Activated CD4-positive, alpha-beta memory T cell treated with anti-CD3 and anti-CD28 coated beads for 36 hours (primary cell): ENCODE measurements at regions of chr20 and their contacts with region 1.

Region 1: GRCh38 chr20:58888521-58889333 is 36.2 kb downstream of the GNAS start:
- DNase-seq: peak; percentile 88
- H3K4me3 Mint-ChIP-seq: peak overlapping the region; percentile 80
- H3K27ac Mint-ChIP-seq: peak overlapping the region; percentile 58
- H3K4me1 Mint-ChIP-seq: peaks cover 27% of the 10 kb centered on the region
- H3K27me3 Mint-ChIP-seq: no peaks in the 10 kb centered on the region

Region 2: DNA sequence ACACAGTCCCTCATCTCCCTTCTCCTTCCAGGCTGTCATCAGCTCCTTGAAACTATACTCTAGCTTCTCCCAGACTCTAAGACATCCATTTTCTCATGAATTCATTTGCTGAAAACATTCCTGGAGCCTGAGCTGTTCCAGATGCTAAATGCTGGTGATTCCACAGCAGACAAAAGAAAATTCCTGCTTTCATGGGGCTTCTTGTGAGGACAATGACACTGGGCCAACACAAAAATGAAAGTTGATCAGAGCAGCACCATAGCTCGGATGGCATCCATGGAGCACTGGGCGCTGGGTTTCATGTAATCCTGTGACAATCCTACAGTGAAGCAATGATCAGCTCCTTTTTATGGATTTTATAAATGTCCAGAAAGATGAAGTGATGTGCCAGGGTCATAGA is 285.0 kb before region 1 on chr20:
- CTCF ChIA-PET with region 1: no interaction called
- POLR2A ChIA-PET with region 1: no interaction called
- intact Hi-C with region 1: no loop called
- DNase-seq: no peak
- H3K4me3 Mint-ChIP-seq: no peak overlapping the region
- H3K27ac Mint-ChIP-seq: no peak overlapping the region
- H3K4me1 Mint-ChIP-seq: no peaks in the 10 kb centered on the region
- H3K27me3 Mint-ChIP-seq: no peaks in the 10 kb centered on the region

Region 3: DNA sequence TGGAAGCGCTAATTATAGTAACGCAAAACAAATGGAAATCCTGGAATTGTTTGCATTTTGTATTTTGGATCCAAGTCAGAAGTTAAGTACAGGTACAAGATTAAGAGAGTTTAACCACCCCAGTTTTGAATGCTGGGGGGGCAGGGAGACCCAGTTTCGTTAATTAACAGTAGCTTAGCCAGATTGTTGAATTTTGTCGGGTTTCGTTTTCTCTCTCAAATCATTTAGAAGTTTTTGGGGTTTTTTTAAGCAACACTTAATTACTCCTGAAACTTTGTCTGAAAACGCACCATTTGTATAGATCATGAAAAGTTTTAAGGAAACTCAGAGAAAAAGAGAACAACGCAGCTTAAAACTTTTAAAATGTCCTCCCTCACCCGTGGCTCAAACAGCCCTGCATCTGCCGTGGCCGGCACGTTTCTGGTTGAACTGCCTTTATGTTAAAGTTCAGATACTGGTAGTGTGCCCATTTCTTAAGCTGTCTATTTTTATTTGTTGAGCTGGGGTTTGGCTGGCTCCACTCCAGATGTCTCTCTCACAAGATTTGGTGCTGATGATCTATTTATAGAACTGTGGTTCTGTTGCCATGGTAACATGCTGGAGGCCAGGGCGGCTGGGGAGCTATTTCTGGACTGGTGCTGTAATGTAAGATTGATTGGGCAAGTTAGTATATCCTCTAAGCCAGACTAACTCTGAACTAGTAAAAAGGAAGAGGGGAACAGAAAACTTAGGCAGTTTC is 18.8 kb after region 1 on chr20:
- CTCF ChIA-PET with region 1: interaction called, 3 read pairs
- POLR2A ChIA-PET with region 1: interaction called, 3 read pairs
- intact Hi-C with region 1: loop called (anchors 1 kb)
- DNase-seq: peak; percentile 72
- H3K4me3 Mint-ChIP-seq: peak overlapping the region; percentile 55
- H3K27ac Mint-ChIP-seq: peak overlapping the region; percentile 81
- H3K4me1 Mint-ChIP-seq: peaks cover 52% of the 10 kb centered on the region
- H3K27me3 Mint-ChIP-seq: no peaks in the 10 kb centered on the region

Region 4: DNA sequence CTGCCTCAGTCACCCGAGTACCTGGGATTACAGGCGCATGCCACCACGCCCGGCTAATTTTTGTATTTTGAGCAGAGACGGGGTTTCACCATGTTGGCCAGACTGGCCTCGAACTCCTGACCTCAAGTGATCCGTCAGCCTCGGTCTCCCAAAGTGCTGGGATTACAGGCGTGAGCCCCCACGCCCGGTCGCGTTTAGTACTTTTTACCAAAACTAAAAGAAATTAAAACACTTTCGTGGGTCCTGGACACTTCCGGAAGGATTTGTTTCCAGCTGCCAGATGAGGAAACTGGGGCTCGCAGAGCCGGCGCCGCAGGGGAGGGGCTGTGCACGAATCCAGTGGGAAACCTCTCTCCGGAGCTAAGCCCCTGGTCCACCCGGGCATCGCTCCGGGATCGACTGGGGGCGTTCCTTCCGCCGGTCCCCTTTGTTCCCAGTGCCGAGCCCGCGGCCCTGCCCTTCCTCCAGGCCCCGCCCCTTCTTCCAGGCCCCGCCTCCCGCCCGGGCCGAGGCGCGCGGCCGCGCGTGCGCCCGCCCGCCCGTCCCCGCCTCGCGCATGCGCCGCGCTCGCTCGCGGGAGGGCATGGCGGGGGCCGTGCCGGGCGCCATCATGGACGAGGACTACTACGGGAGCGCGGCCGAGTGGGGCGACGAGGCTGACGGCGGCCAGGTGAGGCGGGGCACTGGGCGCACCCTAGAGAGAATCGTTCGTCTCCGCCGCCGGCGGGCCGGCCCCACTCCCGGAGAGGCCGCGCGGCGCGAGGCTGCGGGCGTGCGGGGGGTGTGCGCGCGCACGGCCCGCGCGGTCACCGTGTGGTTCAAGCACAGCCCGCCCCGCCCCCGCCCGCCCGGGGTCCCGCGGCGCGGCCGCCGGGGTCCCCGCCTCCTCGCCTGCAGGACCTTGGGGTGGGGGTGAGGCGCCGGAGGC is 92.2 kb after region 1 on chr20 and contains the start of gene NELFCD:
- CTCF ChIA-PET with region 1: no interaction called
- POLR2A ChIA-PET with region 1: interaction called, 4 read pairs
- intact Hi-C with region 1: loop called (anchors 2 kb)
- DNase-seq: peak; percentile 92
- H3K4me3 Mint-ChIP-seq: peak within 1 kb of the TSS; percentile 91
- H3K27ac Mint-ChIP-seq: peak within 1 kb of the TSS; percentile 88
- H3K4me1 Mint-ChIP-seq: peaks cover 34% of the 10 kb centered on the region
- H3K27me3 Mint-ChIP-seq: no peaks in the 10 kb centered on the region
- total RNA-seq, gene NELFCD: 80.5 to 92.3 TPM

Region 5: DNA sequence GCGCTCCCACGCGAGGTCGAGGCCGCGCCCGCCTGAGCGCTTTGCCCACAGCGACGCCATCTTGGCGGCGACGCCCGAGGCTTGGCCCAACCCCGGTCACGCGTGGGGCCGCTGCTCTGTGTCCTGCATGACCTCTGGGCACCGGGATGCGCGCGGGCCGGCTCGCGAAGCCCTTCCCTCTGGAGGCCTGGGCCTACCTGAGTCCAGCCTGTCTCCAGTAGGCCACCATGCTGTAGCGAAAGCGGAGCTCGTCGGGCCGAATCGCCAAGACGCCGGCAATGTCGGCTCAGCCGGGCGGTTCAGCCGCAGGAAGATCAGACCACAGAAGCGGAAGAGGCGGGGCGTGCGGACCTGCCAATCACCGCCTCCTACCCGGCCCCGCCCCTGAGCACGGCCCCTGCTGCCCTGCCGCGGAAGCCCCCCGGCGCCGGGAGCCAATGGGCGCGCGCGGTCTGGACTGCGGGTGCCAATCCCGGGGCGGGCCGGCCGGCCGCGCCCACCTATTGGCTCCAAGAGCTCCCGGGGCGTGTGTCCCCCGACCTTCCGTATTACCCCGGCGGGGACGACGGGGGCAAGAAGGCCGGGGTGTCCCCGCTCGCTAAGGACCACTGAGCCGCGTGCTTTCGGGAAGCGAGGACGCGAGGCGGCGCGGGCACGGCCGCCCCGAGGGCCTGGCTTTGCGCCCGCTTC is 143.4 kb after region 1 on chr20 and contains the start of gene ATP5F1E:
- CTCF ChIA-PET with region 1: no interaction called
- POLR2A ChIA-PET with region 1: interaction called, 12 read pairs
- intact Hi-C with region 1: loop called (anchors 2 kb)
- DNase-seq: peak; percentile 97
- H3K4me3 Mint-ChIP-seq: peak within 1 kb of the TSS; percentile 94
- H3K27ac Mint-ChIP-seq: peak within 1 kb of the TSS; percentile 94
- H3K4me1 Mint-ChIP-seq: peaks cover 73% of the 10 kb centered on the region
- H3K27me3 Mint-ChIP-seq: no peaks in the 10 kb centered on the region
- total RNA-seq, gene ATP5F1E: 82.2 to 90.4 TPM

Region 6: GRCh38 chr20:59120491-59120890 is 231.8 kb after region 1 on chr20:
- CTCF ChIA-PET with region 1: no interaction called
- POLR2A ChIA-PET with region 1: no interaction called
- intact Hi-C with region 1: loop called (anchors 1 kb)
- DNase-seq: peak; percentile 65
- H3K4me3 Mint-ChIP-seq: no peak overlapping the region
- H3K27ac Mint-ChIP-seq: peak overlapping the region; percentile 94
- H3K4me1 Mint-ChIP-seq: peaks cover 71% of the 10 kb centered on the region
- H3K27me3 Mint-ChIP-seq: no peaks in the 10 kb centered on the region

Region 7: DNA sequence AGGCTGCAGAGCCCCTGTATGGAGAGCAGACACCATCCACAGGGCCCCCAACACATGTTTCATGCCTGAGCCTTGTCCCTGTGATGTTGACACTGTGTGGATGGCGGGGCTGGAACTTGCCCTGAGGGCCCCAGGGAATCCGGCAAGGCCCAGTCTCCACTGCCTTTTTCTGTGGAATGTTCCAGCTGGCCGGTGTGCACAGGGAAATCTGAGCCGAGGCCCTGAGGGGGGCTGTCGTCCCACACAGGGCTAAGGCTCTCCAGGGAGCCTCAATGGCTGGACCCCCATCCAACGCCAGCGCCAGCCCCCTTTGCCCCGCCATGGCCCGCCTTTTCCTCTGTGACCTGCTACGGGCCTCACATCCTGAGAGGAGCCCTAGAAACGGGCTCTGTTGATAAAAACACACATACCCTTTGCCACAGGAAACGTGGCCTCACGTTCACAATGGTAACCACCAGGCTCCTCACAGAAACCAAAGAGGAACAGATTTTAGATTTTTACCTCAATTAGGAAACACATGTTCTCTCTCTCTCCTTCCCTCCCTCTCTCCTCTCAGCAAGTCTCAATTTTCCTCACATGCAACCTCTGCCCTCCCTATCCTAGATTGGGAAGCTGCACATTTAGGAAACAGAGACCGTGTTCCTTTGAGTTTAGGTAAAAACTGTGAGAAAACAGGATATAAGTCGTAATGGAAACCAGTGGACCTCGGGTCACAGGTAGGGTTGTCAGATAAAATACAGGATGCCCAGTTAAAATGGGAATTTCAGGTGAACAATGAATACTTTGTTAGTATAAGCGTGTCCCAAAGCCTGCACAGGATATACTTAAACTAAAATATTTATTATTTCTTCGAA is 261.2 kb after region 1 on chr20:
- CTCF ChIA-PET with region 1: no interaction called
- POLR2A ChIA-PET with region 1: no interaction called
- intact Hi-C with region 1: loop called (anchors 1 kb)
- DNase-seq: peak; percentile 85
- H3K4me3 Mint-ChIP-seq: peak overlapping the region; percentile 62
- H3K27ac Mint-ChIP-seq: peak overlapping the region; percentile 92
- H3K4me1 Mint-ChIP-seq: peaks cover 88% of the 10 kb centered on the region
- H3K27me3 Mint-ChIP-seq: no peaks in the 10 kb centered on the region

Region 8: GRCh38 chr20:59165891-59166709 is 277.4 kb after region 1 on chr20:
- CTCF ChIA-PET with region 1: no interaction called
- POLR2A ChIA-PET with region 1: interaction called, 5 read pairs
- intact Hi-C with region 1: loop called (anchors 5 kb)
- DNase-seq: peak; percentile 65
- H3K4me3 Mint-ChIP-seq: peak overlapping the region; percentile 77
- H3K27ac Mint-ChIP-seq: peak overlapping the region; percentile 96
- H3K4me1 Mint-ChIP-seq: peaks cover 77% of the 10 kb centered on the region
- H3K27me3 Mint-ChIP-seq: no peaks in the 10 kb centered on the region